ENCODE measurements at regions of chr10 and their contacts with region 1.

Region 1: GRCh38 chr10:61397175-61397986 is 55.8 kb downstream of the TMEM26 start:
- DNase-seq: no peak
- ATAC-seq: peak; percentile 49
- H3K4me3 ChIP-seq: no peak overlapping the region
- H3K27ac ChIP-seq: no peak overlapping the region
- H3K4me1 ChIP-seq: no peaks in the 10 kb centered on the region
- H3K27me3 ChIP-seq: no peaks in the 10 kb centered on the region
- CTCF ChIP-seq: no peak
- EP300 ChIP-seq: no peak
- POLR2A ChIP-seq: no peak
- RAD21 ChIP-seq: no peak

Region 2: DNA sequence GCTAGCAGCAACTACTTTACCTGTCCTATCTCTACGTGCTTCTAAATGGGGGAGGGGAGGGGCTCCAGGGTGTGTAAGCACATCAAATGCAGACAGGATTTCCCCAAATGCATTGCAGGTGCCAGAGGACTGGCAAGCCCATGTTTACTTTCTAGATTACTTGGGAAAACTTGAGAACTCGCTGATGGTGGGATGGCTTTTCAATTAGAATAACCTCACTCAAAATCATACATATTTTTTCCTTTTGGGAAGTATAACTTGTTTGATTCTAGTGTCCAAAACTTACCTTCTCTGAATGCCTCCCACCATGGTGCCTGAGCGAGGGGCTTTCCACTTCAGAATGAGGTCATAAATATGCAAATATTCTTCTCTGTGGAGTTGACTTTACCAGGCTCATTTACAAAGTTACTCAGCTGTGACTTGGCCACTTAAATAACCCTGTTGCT is 262.1 kb before region 1 on chr10:
- CTCF ChIA-PET with region 1: no interaction called
- POLR2A ChIA-PET with region 1: no interaction called
- RAD21 ChIA-PET with region 1: no interaction called
- SMC1A ChIA-PET with region 1: no interaction called
- in situ Hi-C with region 1: no loop called
- intact Hi-C with region 1: loop called (anchors 10 kb)
- DNase-seq: peak; percentile 49
- ATAC-seq: peak; percentile 99
- H3K4me3 ChIP-seq: no peak overlapping the region
- H3K27ac ChIP-seq: peak overlapping the region; percentile 42; the same call in 1 of the 2 replicates
- H3K4me1 ChIP-seq: peaks cover 7% of the 10 kb centered on the region; the same call in 1 of the 2 replicates
- H3K27me3 ChIP-seq: no peaks in the 10 kb centered on the region
- CTCF ChIP-seq: no peak
- EP300 ChIP-seq: peak in 1 of 2 experiments; percentile 8; a peak in 1 of 4 replicates
- POLR2A ChIP-seq: no peak
- RAD21 ChIP-seq: no peak

Region 3: GRCh38 chr10:61448841-61449600 is 51.6 kb after region 1 on chr10:
- CTCF ChIA-PET with region 1: no interaction called
- POLR2A ChIA-PET with region 1: no interaction called
- RAD21 ChIA-PET with region 1: no interaction called
- SMC1A ChIA-PET with region 1: no interaction called
- in situ Hi-C with region 1: no loop called
- intact Hi-C with region 1: no loop called
- DNase-seq: no peak
- ATAC-seq: no peak
- H3K4me3 ChIP-seq: no peak overlapping the region
- H3K27ac ChIP-seq: no peak overlapping the region
- H3K4me1 ChIP-seq: no peaks in the 10 kb centered on the region
- H3K27me3 ChIP-seq: peaks cover 2 to 4% of the 10 kb centered on the region in 2 experiments; a peak in 1 of 4 replicates
- CTCF ChIP-seq: no peak
- EP300 ChIP-seq: no peak
- POLR2A ChIP-seq: no peak
- RAD21 ChIP-seq: no peak

Measured in GM12878 (cell line).